K562 (cell line): ENCODE measurements at regions of chr20 and their contacts with region 1.

Region 1: GRCh38 chr20:47453142-47453782 is 48.4 kb upstream of the NCOA3 start:
- DNase-seq: no peak
- ATAC-seq: no peak; the same call in 2 of the 3 replicates
- H3K4me3 ChIP-seq: no peak overlapping the region
- H3K27ac ChIP-seq: no peak overlapping the region
- H3K4me1 ChIP-seq: peaks cover 6 to 7% of the 10 kb centered on the region in 2 experiments; a peak in 4 of 5 replicates
- H3K27me3 ChIP-seq: no peaks in the 10 kb centered on the region
- CTCF ChIP-seq: no peak
- EP300 ChIP-seq: no peak
- POLR2A ChIP-seq: no peak
- RAD21 ChIP-seq: no peak

Region 2: GRCh38 chr20:47438577-47439381 is 14.5 kb before region 1 on chr20:
- CTCF ChIA-PET with region 1: no interaction called
- POLR2A ChIA-PET with region 1: interaction called, 15 read pairs
- in situ Hi-C with region 1: no loop called
- intact Hi-C with region 1: no loop called
- DNase-seq: peak; percentile 67 to 77 (median 71)
- ATAC-seq: peak; percentile 95
- H3K4me3 ChIP-seq: no peak overlapping the region
- H3K27ac ChIP-seq: peak overlapping the region; percentile 15; the same call in 1 of the 3 replicates
- H3K4me1 ChIP-seq: peaks cover 0 to 6% of the 10 kb centered on the region in 2 experiments; a peak in 3 of 5 replicates
- H3K27me3 ChIP-seq: no peaks in the 10 kb centered on the region
- CTCF ChIP-seq: no peak
- EP300 ChIP-seq: no peak
- POLR2A ChIP-seq: no peak
- RAD21 ChIP-seq: no peak

Region 3: GRCh38 chr20:47464380-47465101 is 11.3 kb after region 1 on chr20:
- CTCF ChIA-PET with region 1: no interaction called
- POLR2A ChIA-PET with region 1: interaction called, 11 read pairs
- in situ Hi-C with region 1: no loop called
- intact Hi-C with region 1: no loop called
- DNase-seq: peak in 1 of 4 experiments; percentile 19
- ATAC-seq: peak; percentile 62
- H3K4me3 ChIP-seq: no peak overlapping the region
- H3K27ac ChIP-seq: no peak overlapping the region
- H3K4me1 ChIP-seq: peaks cover 0 to 19% of the 10 kb centered on the region in 2 experiments; a peak in 4 of 5 replicates
- H3K27me3 ChIP-seq: no peaks in the 10 kb centered on the region
- CTCF ChIP-seq: 0 out of 6 replicates have a peak, but pooled peaks of 1 of the 3 experiments have one; percentile 12
- EP300 ChIP-seq: peak; percentile 15; the same call in 1 of the 2 replicates
- POLR2A ChIP-seq: no peak
- RAD21 ChIP-seq: peak in 1 of 2 experiments; percentile 7; a peak in 1 of 4 replicates

Region 4: GRCh38 chr20:47493175-47493962 is 40.1 kb after region 1 on chr20:
- CTCF ChIA-PET with region 1: no interaction called
- POLR2A ChIA-PET with region 1: no interaction called
- in situ Hi-C with region 1: no loop called
- intact Hi-C with region 1: no loop called
- DNase-seq: peak; percentile 53 to 78 (median 64)
- ATAC-seq: peak; percentile 94
- H3K4me3 ChIP-seq: no peak overlapping the region
- H3K27ac ChIP-seq: no peak overlapping the region; the same call in 2 of the 3 replicates
- H3K4me1 ChIP-seq: peaks cover 3 to 14% of the 10 kb centered on the region in 2 experiments; a peak in 4 of 5 replicates
- H3K27me3 ChIP-seq: no peaks in the 10 kb centered on the region
- CTCF ChIP-seq: no peak
- EP300 ChIP-seq: peak; percentile 31; the same call in 1 of the 2 replicates
- POLR2A ChIP-seq: no peak
- RAD21 ChIP-seq: no peak